ENCODE measurements at regions of chr17 and their contacts with region 1.

Region 1: GRCh38 chr17:79839363-79840268 is at the start of gene CBX4:
- DNase-seq: peak; percentile 82
- H3K4me3 ChIP-seq: peak within 1 kb of the TSS; percentile 71 to 89 (median 89)
- H3K27ac ChIP-seq: no peak within 1 kb of the TSS
- H3K4me1 ChIP-seq: peaks cover 18% of the 10 kb centered on the region
- H3K27me3 ChIP-seq: peaks cover 28 to 42% of the 10 kb centered on the region in 2 experiments
- CTCF ChIP-seq: peak; percentile 56 to 63
- POLR2A ChIP-seq: peak; percentile 86
- total RNA-seq, gene CBX4: 12.3 TPM in 2 replicates

Region 2: GRCh38 chr17:79741751-79742588 is 97.6 kb before region 1 on chr17:
- CTCF ChIA-PET with region 1: interaction called, 15 read pairs
- POLR2A ChIA-PET with region 1: no interaction called
- dilution Hi-C with region 1: no loop called
- intact Hi-C with region 1: loop called (anchors 1 kb)
- DNase-seq: peak; percentile 62
- H3K4me3 ChIP-seq: no peak overlapping the region
- H3K27ac ChIP-seq: no peak overlapping the region
- H3K4me1 ChIP-seq: no peaks in the 10 kb centered on the region
- H3K27me3 ChIP-seq: peaks cover 14 to 29% of the 10 kb centered on the region in 2 experiments
- CTCF ChIP-seq: peak; percentile 88 to 93
- POLR2A ChIP-seq: no peak

Region 3: GRCh38 chr17:79789534-79790353 is 49.9 kb before region 1 on chr17:
- CTCF ChIA-PET with region 1: interaction called, 10 read pairs
- POLR2A ChIA-PET with region 1: no interaction called
- dilution Hi-C with region 1: no loop called
- intact Hi-C with region 1: loop called (anchors 1 kb)
- DNase-seq: no peak
- H3K4me3 ChIP-seq: no peak overlapping the region
- H3K27ac ChIP-seq: no peak overlapping the region
- H3K4me1 ChIP-seq: peaks cover 6% of the 10 kb centered on the region
- H3K27me3 ChIP-seq: peaks cover 40 to 57% of the 10 kb centered on the region in 2 experiments
- CTCF ChIP-seq: peak; percentile 71 to 84
- POLR2A ChIP-seq: no peak

Region 4: DNA sequence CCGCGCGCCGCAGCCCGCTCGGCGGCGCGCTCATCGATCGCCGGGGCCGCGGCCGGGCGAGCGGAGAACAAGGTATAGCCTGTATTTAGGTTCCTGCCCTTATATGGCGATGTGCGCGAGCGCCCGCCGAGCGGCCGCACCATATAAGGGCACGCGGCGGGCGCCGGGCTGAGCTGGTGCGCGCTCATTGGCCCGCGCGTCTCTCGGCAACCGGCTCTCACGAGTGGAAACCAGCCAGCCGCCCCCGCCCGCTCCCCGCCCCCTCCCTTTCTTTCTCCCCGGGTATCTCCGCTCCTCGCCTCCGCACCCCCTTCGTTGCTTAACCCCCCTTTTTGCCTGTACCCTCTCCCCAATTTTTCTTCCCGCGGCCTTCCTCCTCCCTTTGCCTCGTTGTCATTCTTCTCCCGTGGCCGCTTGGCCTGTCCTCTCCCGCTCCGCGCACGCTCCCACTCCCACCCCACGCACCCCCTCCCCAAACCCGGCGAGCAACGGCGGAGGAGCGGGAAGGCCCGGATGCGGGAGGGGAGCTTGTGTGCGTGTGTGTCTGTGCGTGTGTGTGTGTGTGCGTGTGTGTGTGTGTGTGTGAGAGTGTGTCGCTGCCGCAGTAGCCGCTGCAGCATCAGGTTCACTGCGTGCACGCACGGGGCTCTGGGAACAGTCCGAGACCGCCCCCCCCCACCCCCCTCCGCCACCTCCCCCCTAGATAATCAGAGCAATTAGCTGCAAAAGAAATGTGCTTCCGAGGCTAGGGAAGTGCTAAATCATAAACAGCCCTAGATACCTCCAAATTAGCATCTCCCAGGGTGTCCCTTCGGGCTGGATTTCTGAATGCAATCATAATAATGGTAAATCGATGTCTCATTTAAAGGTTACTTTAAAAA is 29.2 kb before region 1 on chr17:
- CTCF ChIA-PET with region 1: interaction called, 59 read pairs
- POLR2A ChIA-PET with region 1: interaction called, 6 read pairs
- dilution Hi-C with region 1: no loop called
- intact Hi-C with region 1: loop called (anchors 2 kb)
- DNase-seq: peak; percentile 64
- H3K4me3 ChIP-seq: no peak overlapping the region
- H3K27ac ChIP-seq: no peak overlapping the region
- H3K4me1 ChIP-seq: peaks cover 8% of the 10 kb centered on the region
- H3K27me3 ChIP-seq: peaks cover 69 to 82% of the 10 kb centered on the region in 2 experiments
- CTCF ChIP-seq: no peak
- POLR2A ChIP-seq: no peak

Region 5: GRCh38 chr17:79923974-79924638 is 84.5 kb after region 1 on chr17:
- CTCF ChIA-PET with region 1: interaction called, 10 read pairs
- POLR2A ChIA-PET with region 1: no interaction called
- dilution Hi-C with region 1: no loop called
- intact Hi-C with region 1: no loop called
- DNase-seq: peak; percentile 28
- H3K4me3 ChIP-seq: no peak overlapping the region
- H3K27ac ChIP-seq: no peak overlapping the region
- H3K4me1 ChIP-seq: peaks cover under 1% of the 10 kb centered on the region
- H3K27me3 ChIP-seq: no peaks in the 10 kb centered on the region
- CTCF ChIP-seq: peak; percentile 49 to 63
- POLR2A ChIP-seq: no peak

Region 6: DNA sequence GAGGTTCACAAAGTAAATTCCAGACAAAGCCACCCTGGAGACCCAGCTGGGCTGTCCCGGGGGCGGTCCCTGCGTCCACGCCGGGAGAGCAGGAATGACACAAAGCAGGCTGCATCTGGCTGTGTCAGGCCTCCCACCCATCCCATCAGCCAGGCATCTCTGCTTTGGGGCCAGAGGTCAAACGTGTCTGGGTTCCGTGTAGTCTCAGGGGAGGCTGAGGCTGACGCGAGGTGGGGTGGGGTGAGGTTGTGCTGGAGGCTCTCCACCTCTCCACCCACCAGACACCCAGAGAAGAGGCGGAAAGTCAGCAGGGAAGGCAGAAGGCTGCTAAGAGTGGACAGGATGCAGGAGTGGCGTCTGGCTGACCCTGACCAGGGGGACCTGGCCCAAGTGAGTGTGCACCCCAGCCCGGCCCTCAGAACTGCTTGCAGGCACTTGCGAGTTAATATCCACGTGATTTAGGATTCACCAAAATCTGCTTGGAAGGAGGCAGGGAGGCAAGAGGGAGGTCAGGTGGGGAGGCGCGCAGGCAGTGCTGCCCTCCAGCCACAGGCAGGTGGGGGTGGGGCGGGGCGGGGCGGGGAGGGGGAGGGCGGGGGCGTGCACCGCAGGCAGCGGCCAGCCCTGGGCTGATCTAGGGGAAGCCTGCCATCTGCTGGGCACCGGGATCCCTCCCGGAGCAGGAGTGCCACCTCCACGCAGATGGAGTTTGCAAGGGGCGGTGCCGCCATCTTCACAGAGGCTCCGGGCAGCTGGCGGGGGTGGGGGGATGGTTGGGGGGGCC is 151.7 kb after region 1 on chr17:
- CTCF ChIA-PET with region 1: interaction called, 4 read pairs
- POLR2A ChIA-PET with region 1: no interaction called
- dilution Hi-C with region 1: no loop called
- intact Hi-C with region 1: loop called (anchors 1 kb)
- DNase-seq: peak; percentile 70
- H3K4me3 ChIP-seq: peak overlapping the region in 1 of 3 experiments; percentile 14
- H3K27ac ChIP-seq: no peak overlapping the region
- H3K4me1 ChIP-seq: peaks cover 20% of the 10 kb centered on the region
- H3K27me3 ChIP-seq: no peaks in the 10 kb centered on the region
- CTCF ChIP-seq: peak; percentile 24 to 79
- POLR2A ChIP-seq: no peak

Region 7: GRCh38 chr17:80034791-80035692 is 195.4 kb after region 1 on chr17:
- CTCF ChIA-PET with region 1: no interaction called
- POLR2A ChIA-PET with region 1: no interaction called
- dilution Hi-C with region 1: no loop called
- intact Hi-C with region 1: no loop called
- DNase-seq: peak; percentile 68
- H3K4me3 ChIP-seq: peak overlapping the region; percentile 57 to 76 (median 59)
- H3K27ac ChIP-seq: peak overlapping the region; percentile 71
- H3K4me1 ChIP-seq: peaks cover 7% of the 10 kb centered on the region
- H3K27me3 ChIP-seq: no peaks in the 10 kb centered on the region
- CTCF ChIP-seq: no peak
- POLR2A ChIP-seq: no peak

Region 8: DNA sequence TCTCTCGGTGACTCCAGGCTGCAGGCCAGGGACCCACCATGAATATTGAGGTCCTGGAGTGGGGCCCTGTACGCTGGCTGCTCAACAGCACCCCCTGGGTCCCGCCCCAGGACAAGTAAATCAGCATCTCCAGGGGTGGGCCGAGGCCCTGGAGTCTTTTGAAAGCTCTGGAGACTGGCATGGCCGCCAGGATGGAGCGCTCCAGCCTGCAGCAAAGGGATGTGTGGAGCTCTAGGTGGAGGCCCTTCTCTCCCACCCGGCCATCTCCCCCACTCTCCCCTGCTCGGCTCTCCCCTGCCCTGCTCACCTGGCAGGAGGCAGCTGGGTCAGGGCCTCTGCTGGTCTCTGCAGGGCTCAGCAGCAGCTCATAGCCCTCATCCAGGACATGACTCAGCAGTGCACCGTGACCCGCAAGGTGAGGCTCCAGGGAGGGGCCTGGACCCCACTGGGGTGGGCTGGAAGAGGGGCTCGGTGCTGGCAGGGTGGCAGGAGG is 363.9 kb after region 1 on chr17:
- CTCF ChIA-PET with region 1: no interaction called
- POLR2A ChIA-PET with region 1: no interaction called
- dilution Hi-C with region 1: no loop called
- intact Hi-C with region 1: no loop called
- DNase-seq: no peak
- H3K4me3 ChIP-seq: no peak overlapping the region
- H3K27ac ChIP-seq: no peak overlapping the region
- H3K4me1 ChIP-seq: no peaks in the 10 kb centered on the region
- H3K27me3 ChIP-seq: no peaks in the 10 kb centered on the region
- CTCF ChIP-seq: no peak
- POLR2A ChIP-seq: no peak

Measured in endothelial cell of umbilical vein (primary cell).